T-cell (primary cell): ENCODE measurements at regions of chr1 and their contacts with region 1.

Region 1: GRCh38 chr1:35301674-35302392 is 33.3 kb downstream of the ZMYM4 start:
- DNase-seq: no peak
- ATAC-seq: no peak
- H3K4me3 ChIP-seq: no peak overlapping the region
- H3K4me3 Mint-ChIP-seq: no peak overlapping the region
- H3K27ac ChIP-seq: no peak overlapping the region
- H3K27ac Mint-ChIP-seq: no peak overlapping the region
- H3K4me1 ChIP-seq: peaks cover 0 to 4% of the 10 kb centered on the region in 2 experiments
- H3K4me1 Mint-ChIP-seq: peaks cover 12 to 27% (median 14%) of the 10 kb centered on the region in 3 donors
- H3K27me3 ChIP-seq: no peaks in the 10 kb centered on the region
- H3K27me3 Mint-ChIP-seq: no peaks in the 10 kb centered on the region

Region 2: DNA sequence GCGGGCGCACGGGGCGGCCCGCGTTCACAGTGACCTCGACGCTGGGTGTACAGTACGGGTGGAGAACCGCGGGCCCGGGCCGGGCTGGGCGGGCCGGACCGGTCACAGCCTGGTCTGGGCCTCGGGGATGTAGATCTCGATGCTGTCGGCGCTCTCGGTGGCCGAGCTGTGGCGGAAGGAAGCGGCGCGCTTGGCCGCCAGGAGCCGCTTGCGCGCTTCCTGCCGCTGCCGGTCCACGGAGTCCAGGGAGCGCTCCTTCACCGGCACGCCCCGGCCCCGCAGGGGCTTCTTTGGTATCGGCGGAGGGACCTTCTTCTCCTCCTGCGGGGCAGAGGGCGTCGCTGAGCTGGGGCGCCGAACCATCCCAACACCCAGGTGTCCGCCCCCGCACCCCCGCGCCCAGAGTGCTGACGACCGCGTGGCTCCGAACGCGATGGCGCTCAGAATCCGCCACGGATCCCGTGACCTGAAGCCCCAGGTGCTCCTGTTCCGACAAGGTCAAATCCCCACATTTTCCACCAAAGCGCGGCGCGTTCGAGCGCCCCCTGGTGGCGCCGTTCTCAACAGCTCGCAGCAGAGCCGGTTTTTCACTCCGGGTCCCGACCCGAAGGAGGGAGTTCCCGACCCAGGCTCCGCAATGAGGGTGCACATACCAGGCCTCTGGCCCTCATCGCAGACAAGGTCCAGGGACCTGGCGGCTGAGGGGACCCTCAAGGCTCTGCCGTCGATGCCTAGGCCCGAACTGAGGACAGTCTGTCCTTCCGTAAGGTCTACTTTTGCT is 435.7 kb before region 1 on chr1:
- CTCF ChIA-PET with region 1: interaction called in 1 of 2 experiments, 12 read pairs
- POLR2A ChIA-PET with region 1: no interaction called
- DNase-seq: peak; percentile 72 to 96 (median 88)
- ATAC-seq: peak; percentile 79 to 88 (median 82)
- H3K4me3 ChIP-seq: peak overlapping the region; percentile 59 to 65
- H3K4me3 Mint-ChIP-seq: peak overlapping the region; percentile 82 to 87 (median 86)
- H3K27ac ChIP-seq: peak overlapping the region; percentile 67
- H3K27ac Mint-ChIP-seq: peak overlapping the region; percentile 84 to 86
- H3K4me1 ChIP-seq: peaks cover 25 to 49% of the 10 kb centered on the region in 2 experiments
- H3K4me1 Mint-ChIP-seq: peaks cover 37 to 50% (median 40%) of the 10 kb centered on the region in 3 donors
- H3K27me3 ChIP-seq: peaks cover 0 to 6% of the 10 kb centered on the region in 2 experiments
- H3K27me3 Mint-ChIP-seq: peaks cover under 1 to 3% of the 10 kb centered on the region in 2 donors

Region 3: DNA sequence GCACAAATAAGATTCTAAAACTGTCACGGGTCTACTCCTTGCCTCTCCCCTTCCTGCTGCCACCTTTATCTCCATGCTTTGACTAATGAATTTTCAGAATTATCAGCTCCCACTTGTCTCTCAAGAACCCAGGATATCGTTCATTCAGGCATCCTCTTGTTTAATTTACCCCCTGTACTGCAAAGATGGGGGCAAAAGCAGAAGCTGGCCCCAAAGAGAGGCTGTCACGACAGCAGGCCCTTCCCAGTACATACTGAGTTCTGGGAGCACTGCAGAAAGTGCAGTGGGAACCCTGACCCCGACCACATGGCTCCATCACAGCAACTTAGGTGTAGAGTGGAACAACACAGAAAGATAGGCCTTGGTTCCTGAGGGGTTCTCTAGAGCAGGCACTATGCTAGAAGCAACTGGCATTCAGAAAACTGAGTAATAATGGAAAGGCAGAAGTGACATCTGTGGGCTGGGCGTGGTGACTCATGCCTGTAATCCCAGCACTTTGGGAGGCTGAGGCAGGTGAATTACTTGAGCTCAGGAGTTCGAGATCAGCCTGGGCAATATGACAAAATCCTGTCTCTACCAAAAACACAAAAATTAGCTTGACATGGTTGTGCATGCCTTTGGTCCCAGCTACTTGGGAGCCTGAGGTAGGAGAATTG is 1156.9 kb after region 1 on chr1:
- CTCF ChIA-PET with region 1: interaction called in 1 of 2 experiments, 11 read pairs
- POLR2A ChIA-PET with region 1: no interaction called
- DNase-seq: no peak
- ATAC-seq: no peak
- H3K4me3 ChIP-seq: no peak overlapping the region
- H3K4me3 Mint-ChIP-seq: peak overlapping the region in 1 of 3 donors; percentile 66
- H3K27ac ChIP-seq: no peak overlapping the region
- H3K27ac Mint-ChIP-seq: peak overlapping the region; percentile 47 to 75
- H3K4me1 ChIP-seq: peaks cover 24 to 40% of the 10 kb centered on the region in 2 experiments
- H3K4me1 Mint-ChIP-seq: peaks cover 45 to 52% (median 46%) of the 10 kb centered on the region in 3 donors
- H3K27me3 ChIP-seq: no peaks in the 10 kb centered on the region
- H3K27me3 Mint-ChIP-seq: no peaks in the 10 kb centered on the region